ENCODE measurements at regions of chr11 and their contacts with region 1.

Region 1: GRCh38 chr11:16613512-16614381 is 124.7 kb upstream of the C11orf58 start:
- DNase-seq: peak; percentile 93
- ATAC-seq: peak; percentile 90
- H3K4me3 Mint-ChIP-seq: peak overlapping the region; percentile 76
- H3K27ac Mint-ChIP-seq: no peak overlapping the region
- H3K4me1 Mint-ChIP-seq: peaks cover 35% of the 10 kb centered on the region
- H3K27me3 Mint-ChIP-seq: peaks cover 32% of the 10 kb centered on the region
- CTCF ChIP-seq: peak; percentile 78

Region 2: GRCh38 chr11:15826826-15827225 is 786.9 kb before region 1 on chr11:
- CTCF ChIA-PET with region 1: interaction called, 12 read pairs
- POLR2A ChIA-PET with region 1: no interaction called
- DNase-seq: peak; percentile 93
- ATAC-seq: peak; percentile 98
- H3K4me3 Mint-ChIP-seq: no peak overlapping the region
- H3K27ac Mint-ChIP-seq: no peak overlapping the region
- H3K4me1 Mint-ChIP-seq: peaks cover 29% of the 10 kb centered on the region
- H3K27me3 Mint-ChIP-seq: no peaks in the 10 kb centered on the region; the same call in 1 of the 2 replicates
- CTCF ChIP-seq: peak; percentile 85

Region 3: GRCh38 chr11:15852179-15852578 is 761.6 kb before region 1 on chr11:
- CTCF ChIA-PET with region 1: interaction called, 11 read pairs
- POLR2A ChIA-PET with region 1: no interaction called
- DNase-seq: peak; percentile 26
- ATAC-seq: peak; percentile 56; the same call in 1 of the 2 replicates
- H3K4me3 Mint-ChIP-seq: no peak overlapping the region
- H3K27ac Mint-ChIP-seq: no peak overlapping the region
- H3K4me1 Mint-ChIP-seq: peaks cover 14% of the 10 kb centered on the region
- H3K27me3 Mint-ChIP-seq: no peaks in the 10 kb centered on the region; the same call in 1 of the 2 replicates
- CTCF ChIP-seq: peak; percentile 40; the same call in 1 of the 2 replicates

Region 4: GRCh38 chr11:15941201-15941770 is 672.5 kb before region 1 on chr11:
- CTCF ChIA-PET with region 1: interaction called, 18 read pairs
- POLR2A ChIA-PET with region 1: interaction called, 3 read pairs
- DNase-seq: peak; percentile 82
- ATAC-seq: peak; percentile 87
- H3K4me3 Mint-ChIP-seq: no peak overlapping the region
- H3K27ac Mint-ChIP-seq: no peak overlapping the region
- H3K4me1 Mint-ChIP-seq: peaks cover 3% of the 10 kb centered on the region
- H3K27me3 Mint-ChIP-seq: peaks cover 29% of the 10 kb centered on the region
- CTCF ChIP-seq: peak; percentile 99

Region 5: DNA sequence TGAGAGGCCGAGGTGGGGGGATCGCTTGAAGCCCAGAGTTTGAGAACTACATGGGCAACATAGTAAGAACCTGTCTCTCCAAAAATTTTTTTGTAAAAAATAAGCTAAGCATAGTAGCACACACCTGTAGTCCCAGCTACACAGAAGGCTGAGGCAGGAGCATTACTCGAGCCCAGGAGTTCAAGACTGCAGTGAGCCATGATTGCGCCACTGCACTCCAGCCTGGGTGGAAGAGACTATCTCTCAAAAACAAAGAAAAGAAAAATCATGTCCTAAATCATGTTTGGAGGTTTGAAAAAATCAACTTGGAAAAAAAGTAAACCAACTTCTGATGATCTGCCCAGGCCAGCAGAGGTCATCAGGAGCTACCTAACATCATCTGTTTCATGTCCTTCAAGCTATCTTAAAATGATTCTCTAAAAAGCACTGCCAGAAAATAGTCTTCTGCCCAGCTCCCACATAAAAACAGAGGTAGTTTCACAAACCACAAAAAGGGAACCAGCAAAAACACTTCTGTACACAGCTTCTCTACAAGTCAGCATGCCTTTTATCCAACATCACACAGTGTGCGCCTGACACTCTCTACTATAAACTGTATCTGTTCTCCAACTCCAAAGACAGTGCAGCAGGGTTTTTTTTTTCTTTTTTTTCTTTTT is 422.4 kb before region 1 on chr11:
- CTCF ChIA-PET with region 1: interaction called, 16 read pairs
- POLR2A ChIA-PET with region 1: no interaction called
- DNase-seq: no peak
- ATAC-seq: no peak
- H3K4me3 Mint-ChIP-seq: no peak overlapping the region
- H3K27ac Mint-ChIP-seq: no peak overlapping the region
- H3K4me1 Mint-ChIP-seq: peaks cover 23% of the 10 kb centered on the region
- H3K27me3 Mint-ChIP-seq: no peaks in the 10 kb centered on the region
- CTCF ChIP-seq: no peak

Region 6: DNA sequence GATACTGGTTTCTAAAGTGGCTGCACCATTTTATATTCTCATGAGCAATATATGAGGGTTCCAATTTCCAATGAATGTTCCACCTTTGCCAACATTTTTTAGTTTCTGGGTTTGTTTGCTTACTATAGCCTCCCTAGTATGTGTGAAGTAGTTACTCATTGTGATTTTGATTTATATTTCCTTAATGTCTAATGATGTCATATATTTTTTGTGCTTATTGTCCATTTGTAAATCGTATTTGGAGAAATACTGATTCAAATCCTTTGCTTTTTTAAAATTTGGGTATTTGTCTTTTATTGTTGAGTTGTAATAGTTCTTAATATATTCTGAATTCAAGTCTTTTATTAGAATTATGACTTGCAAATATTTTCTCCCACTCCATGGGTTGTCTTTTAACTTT is 36.3 kb before region 1 on chr11:
- CTCF ChIA-PET with region 1: no interaction called
- POLR2A ChIA-PET with region 1: no interaction called
- DNase-seq: no peak
- ATAC-seq: no peak
- H3K4me3 Mint-ChIP-seq: no peak overlapping the region
- H3K27ac Mint-ChIP-seq: no peak overlapping the region
- H3K4me1 Mint-ChIP-seq: peaks cover 4% of the 10 kb centered on the region; the same call in 1 of the 2 replicates
- H3K27me3 Mint-ChIP-seq: no peaks in the 10 kb centered on the region; the same call in 1 of the 2 replicates
- CTCF ChIP-seq: no peak

Region 7: DNA sequence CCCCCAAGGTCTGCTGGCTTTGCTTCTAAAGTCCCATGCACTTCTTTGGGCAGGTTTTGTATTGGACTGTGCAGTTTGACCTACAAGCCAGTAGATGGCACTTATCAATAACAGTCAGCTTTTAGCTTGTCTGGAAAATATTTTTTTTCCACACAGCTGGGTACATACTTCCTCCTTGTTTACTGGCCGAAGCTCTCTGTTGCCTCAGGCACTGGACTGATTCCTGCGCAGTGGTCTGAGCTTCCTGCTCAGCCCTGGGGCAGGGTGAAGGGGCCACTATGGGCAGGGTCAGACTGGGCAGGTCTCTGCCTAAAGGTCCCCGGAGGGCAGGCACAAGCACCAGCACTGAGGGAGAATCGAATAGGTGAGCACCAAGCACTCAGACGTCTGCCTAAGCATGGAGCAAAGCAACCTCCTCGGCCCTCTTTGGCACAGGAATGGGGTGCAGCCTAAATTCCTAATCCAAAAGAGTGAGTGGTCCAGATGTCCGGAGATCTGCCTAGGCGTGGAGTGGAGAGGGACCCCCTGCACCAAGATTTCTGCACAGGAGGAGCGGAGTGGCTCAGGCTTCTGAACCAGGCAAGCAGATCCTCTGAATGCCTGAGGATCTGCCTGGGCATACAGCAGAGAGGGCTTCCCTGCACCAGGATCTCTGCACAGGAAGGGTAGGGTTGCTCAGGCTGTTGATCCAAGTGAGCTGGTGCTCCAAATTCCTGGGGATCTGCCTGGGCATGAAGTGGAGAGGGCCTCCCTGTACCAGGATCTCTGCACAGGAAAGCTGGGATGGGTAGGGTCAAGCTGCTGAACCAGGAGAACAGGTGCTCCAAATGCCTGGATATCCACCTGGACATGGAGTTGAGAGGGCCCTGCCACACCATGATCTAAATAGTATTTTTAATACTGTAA is 18.8 kb after region 1 on chr11:
- CTCF ChIA-PET with region 1: interaction called, 10 read pairs
- POLR2A ChIA-PET with region 1: no interaction called
- DNase-seq: no peak
- ATAC-seq: peak; percentile 91
- H3K4me3 Mint-ChIP-seq: no peak overlapping the region
- H3K27ac Mint-ChIP-seq: peak overlapping the region; percentile 12; the same call in 1 of the 2 replicates
- H3K4me1 Mint-ChIP-seq: 0 out of 2 replicates have a peak, but pooled peaks cover 3% of the 10 kb centered on the region
- H3K27me3 Mint-ChIP-seq: peaks cover 15% of the 10 kb centered on the region
- CTCF ChIP-seq: peak; percentile 9; the same call in 1 of the 2 replicates

Region 8: DNA sequence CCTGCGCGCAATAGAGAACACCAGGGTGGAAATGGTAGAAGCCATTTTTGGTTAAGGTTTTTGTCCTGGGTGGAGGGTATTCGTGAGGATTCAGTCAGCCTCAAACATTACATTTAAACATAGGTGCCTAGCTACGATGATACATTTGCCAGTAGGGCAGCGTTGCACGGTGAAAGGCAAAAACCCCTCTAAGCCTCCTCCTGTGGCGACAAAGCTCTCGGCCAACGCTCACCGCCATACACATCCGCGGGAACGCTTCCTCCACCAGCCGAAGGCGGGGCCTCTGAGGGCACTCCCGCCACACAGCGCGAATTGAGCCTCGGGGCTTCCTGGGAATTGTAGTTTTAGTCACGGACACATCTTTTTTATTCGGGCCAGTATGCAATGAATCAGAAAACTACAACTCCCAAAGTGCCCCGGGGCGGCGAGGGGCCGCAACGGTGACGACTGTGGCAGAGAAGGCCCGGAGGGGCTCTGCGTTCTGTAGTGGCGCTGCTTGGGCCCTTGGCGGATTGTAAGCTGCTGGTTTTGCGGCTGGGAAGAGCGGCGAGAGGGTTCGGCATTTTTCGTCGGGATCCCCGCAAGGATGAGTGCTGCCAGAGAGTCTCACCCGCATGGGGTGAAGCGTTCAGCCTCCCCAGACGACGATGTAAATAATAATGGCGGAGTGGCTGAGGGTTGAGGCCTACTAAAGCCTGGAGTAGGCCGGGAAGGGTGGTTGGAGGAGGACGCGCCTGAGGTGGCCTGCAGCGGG is 124.6 kb after region 1 on chr11 and contains the start of gene C11orf58:
- CTCF ChIA-PET with region 1: interaction called, 11 read pairs
- POLR2A ChIA-PET with region 1: no interaction called
- DNase-seq: peak; percentile 97
- ATAC-seq: peak; percentile 97
- H3K4me3 Mint-ChIP-seq: no peak within 1 kb of the TSS
- H3K27ac Mint-ChIP-seq: peak within 1 kb of the TSS; percentile 26; the same call in 1 of the 2 replicates
- H3K4me1 Mint-ChIP-seq: peaks cover 21% of the 10 kb centered on the region
- H3K27me3 Mint-ChIP-seq: no peaks in the 10 kb centered on the region
- CTCF ChIP-seq: no peak
- total RNA-seq, gene C11orf58: 129 to 141 TPM (median 132 TPM) in 3 replicates

Measured in WTC11 (cell line).